HEK293 (cell line): ENCODE measurements at regions of chr3 and their contacts with region 1.

Region 1: GRCh38 chr3:49411968-49412631 is at the starts of genes RHOA and TCTA:
- H3K4me3 ChIP-seq: peak within 1 kb of the TSS; percentile 98
- H3K27ac ChIP-seq: peak within 1 kb of the TSS; percentile 96
- H3K4me1 ChIP-seq: peaks cover 7% of the 10 kb centered on the region
- CTCF ChIP-seq: no peak

Region 2: DNA sequence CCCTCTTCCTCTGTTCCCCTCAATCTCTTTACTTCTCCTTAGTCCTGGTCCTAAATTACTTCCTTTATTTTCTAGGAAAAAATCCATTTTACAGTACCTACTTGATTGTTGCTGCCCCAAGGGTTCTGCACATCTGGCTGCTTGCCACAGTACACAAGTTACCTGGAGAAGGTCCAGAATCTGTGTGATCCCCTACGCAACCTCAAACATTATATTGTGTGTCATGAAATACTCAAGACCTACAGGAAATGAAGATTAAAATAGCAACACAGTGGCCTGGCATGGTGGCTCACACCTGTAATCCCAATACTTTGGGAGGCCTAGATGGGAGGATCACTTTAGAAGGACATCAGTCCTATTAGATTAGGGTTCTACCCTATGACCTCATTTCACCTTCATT is 613.1 kb before region 1 on chr3:
- CTCF ChIA-PET with region 1: no interaction called
- POLR2A ChIA-PET with region 1: no interaction called
- H3K4me3 ChIP-seq: no peak overlapping the region
- H3K27ac ChIP-seq: no peak overlapping the region
- H3K4me1 ChIP-seq: no peaks in the 10 kb centered on the region
- CTCF ChIP-seq: no peak

Region 3: DNA sequence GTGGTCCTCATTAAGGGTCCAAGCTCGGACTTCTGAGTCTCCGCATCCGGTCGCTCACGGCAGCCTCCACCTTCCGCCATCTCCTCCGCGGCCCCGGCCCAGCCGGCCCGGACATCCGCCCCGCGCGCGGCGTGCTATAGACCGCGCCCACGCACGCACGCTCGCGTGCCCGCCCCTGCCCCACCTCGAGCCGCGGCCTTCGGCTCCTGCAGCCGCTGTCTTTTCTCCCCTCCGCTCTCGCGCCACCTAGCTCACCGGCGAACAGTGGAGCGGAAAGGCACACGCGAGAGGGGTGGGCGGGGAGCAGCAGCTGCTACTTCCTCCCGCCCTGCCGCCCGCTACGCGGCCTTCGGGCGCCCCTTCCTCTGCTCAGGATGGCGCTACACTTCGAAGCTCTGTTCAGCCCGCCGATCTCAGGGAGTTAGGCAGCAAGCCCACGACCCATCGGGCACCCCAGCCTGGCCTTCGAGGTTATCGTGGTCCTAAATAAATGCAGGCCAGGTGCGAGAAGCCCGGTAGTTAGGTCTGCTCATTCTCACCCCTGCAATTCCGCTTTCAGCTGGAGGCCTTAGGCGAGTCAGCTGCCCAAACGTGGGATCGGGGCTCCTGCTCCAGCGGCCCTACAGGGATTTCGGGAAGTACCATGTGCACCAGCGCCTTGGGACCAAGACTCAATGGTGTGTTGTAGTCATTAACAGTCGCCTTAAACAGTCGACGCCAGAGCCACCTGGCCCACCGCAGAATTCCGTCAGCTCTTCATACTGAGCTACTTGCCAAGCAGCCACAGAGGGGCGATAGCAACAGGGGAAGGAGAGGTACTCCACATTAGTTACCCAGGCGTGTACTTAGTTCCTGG is 71.9 kb before region 1 on chr3 and contains the start of gene USP4:
- CTCF ChIA-PET with region 1: interaction called, 4 read pairs
- POLR2A ChIA-PET with region 1: interaction called, 33 read pairs
- H3K4me3 ChIP-seq: peak within 1 kb of the TSS; percentile 79
- H3K27ac ChIP-seq: peak within 1 kb of the TSS; percentile 88
- H3K4me1 ChIP-seq: no peaks in the 10 kb centered on the region
- CTCF ChIP-seq: peak; percentile 78

Region 4: DNA sequence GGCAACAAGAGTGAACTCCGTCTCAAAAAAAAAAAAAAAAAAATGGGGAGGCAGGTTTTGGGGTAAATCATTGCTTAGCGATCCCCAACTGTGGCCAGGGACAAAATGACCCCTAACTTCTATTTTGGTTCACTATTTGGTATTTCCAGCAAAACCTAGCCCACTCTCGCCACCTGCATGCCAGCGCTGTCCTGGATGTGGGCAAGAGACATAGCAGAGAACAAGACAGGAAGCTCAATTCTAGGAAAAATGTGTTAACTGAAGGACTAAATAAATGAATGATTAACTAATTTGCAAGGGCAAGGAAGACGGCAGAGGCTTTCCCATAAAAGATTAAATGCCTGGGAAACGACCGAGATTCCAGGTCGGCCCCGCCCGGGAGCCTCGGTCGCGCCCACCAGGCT is 16.6 kb after region 1 on chr3:
- CTCF ChIA-PET with region 1: no interaction called
- POLR2A ChIA-PET with region 1: interaction called, 17 read pairs
- H3K4me3 ChIP-seq: peak overlapping the region; percentile 80
- H3K27ac ChIP-seq: peak overlapping the region; percentile 80; the same call in 1 of the 2 replicates
- H3K4me1 ChIP-seq: no peaks in the 10 kb centered on the region
- CTCF ChIP-seq: no peak

Region 5: GRCh38 chr3:49445381-49445780 is 33.3 kb after region 1 on chr3:
- CTCF ChIA-PET with region 1: interaction called, 7 read pairs
- POLR2A ChIA-PET with region 1: interaction called, 10 read pairs
- H3K4me3 ChIP-seq: no peak overlapping the region
- H3K27ac ChIP-seq: no peak overlapping the region
- H3K4me1 ChIP-seq: no peaks in the 10 kb centered on the region
- CTCF ChIP-seq: no peak